Heart left ventricle (tissue), 16 donors: ENCODE measurements at regions of chr3 and their contacts with region 1.

Region 1: GRCh38 chr3:52197842-52198668 is at the start of gene ALAS1:
- DNase-seq: peak; percentile 93 to 96 (median 93)
- ATAC-seq: peak; percentile 84 to 93 (median 86)
- H3K4me3 ChIP-seq: peak within 1 kb of the TSS; percentile 46 to 99 (median 84)
- H3K27ac ChIP-seq: peak within 1 kb of the TSS; percentile 53 to 96 (median 90)
- H3K4me1 ChIP-seq: peaks cover 8 to 74% (median 63%) of the 10 kb centered on the region in 12 donors
- H3K27me3 ChIP-seq: no peaks in the 10 kb centered on the region
- CTCF ChIP-seq: peak in 5 of 12 donors; percentile 7 to 31 (median 20)
- POLR2A ChIP-seq: peak; percentile 55 to 98
- total RNA-seq, gene ALAS1: 77.9 to 213 (median 146) TPM

Region 2: GRCh38 chr3:52154117-52155094 is 43.6 kb before region 1 on chr3 and contains the start of gene POC1A:
- intact Hi-C with region 1: loop called in 7 of 10 experiments (anchors 1 to 5 kb)
- DNase-seq: peak; percentile 95 to 99 (median 96)
- ATAC-seq: peak; percentile 98 to 99 (median 98)
- H3K4me3 ChIP-seq: peak within 1 kb of the TSS; percentile 38 to 73 (median 66)
- H3K27ac ChIP-seq: peak within 1 kb of the TSS; percentile 9 to 95 (median 88)
- H3K4me1 ChIP-seq: peaks cover 4 to 18% (median 13%) of the 10 kb centered on the region in 12 donors
- H3K27me3 ChIP-seq: no peaks in the 10 kb centered on the region
- CTCF ChIP-seq: peak in 6 of 12 donors; percentile 8 to 34 (median 19)
- POLR2A ChIP-seq: peak in 1 of 2 donors; percentile 64
- total RNA-seq, gene POC1A: 0.66 to 5.2 (median 1.4) TPM

Region 3: DNA sequence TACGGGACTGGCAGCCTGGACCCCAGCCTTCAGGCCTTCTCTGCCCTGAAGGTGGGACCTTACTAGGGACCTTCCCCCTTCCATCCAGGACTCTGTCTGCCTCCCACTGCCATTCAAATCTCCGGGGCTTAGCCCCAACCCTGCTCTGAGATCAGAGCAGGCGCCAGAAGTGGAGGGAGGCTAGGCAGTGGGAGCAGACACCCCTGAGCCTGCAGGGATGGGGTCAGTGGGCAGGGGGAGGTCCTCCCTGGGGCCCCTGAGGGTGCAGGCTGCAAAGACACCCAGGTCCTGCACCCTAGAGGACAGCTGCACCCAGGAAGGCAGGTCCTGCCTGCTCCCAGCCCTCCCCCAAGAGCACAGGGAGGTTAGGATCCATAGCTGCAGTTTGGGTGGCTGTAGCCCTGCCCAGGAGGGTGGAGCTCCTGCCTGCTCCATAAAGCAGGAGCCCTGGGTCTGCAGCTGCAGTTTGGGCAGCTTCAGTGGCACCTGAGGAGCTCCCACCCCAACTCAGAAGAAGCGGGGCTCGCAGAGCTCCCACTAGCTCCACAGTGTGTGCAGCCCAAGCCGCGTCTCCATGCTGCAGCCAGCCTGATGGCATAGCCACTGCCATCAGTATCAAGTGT is 35.7 kb before region 1 on chr3:
- intact Hi-C with region 1: loop called in 3 of 10 experiments (anchors 5 kb)
- DNase-seq: no peak
- ATAC-seq: peak in 1 of 4 donors; percentile 29
- H3K4me3 ChIP-seq: no peak overlapping the region
- H3K27ac ChIP-seq: no peak overlapping the region
- H3K4me1 ChIP-seq: no peaks in the 10 kb centered on the region
- H3K27me3 ChIP-seq: no peaks in the 10 kb centered on the region
- CTCF ChIP-seq: no peak
- POLR2A ChIP-seq: no peak